GM12878 (cell line): ENCODE measurements at regions of chr11 and their contacts with region 1.

Region 1: DNA sequence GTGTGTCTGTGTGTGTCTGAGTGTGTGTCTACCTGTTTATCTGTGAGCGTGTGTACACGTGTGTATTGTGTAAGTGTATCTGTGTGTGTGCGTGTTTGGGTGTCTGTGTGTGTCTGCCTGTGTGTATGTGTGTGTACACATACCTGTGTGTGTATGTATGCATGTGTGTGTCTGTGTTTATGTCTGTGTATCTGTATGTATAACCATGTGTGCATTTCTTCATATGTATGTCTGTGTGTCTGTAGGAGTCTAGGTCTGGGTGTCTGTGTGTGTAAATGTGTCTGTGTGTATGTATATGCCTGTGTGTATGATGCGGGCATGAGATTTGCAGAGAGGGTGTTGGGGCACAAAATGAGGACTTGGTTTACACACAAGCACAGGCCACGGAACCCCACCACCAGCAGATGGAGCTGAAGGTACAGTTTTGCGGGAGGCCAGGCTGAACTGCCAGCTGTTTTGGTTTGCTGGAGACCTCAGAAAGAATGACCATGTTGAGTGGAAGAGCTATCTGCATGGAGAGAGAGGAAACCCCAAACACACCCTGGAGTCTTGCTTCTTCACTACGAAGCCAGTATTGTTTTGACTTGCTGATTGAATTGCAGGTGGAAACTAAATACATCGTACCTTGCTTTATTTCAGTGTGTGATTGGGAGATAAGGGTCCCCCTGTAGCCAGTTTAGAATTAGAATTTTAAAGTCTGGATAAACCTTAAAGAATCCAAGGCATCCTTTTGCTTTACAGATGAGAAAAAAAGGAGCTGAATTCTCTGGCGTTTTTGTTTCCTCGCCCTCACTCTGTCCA is 497.2 kb downstream of the NTM start:
- DNase-seq: no peak
- ATAC-seq: peak; percentile 96
- H3K4me3 ChIP-seq: no peak overlapping the region
- H3K27ac ChIP-seq: no peak overlapping the region
- H3K4me1 ChIP-seq: no peaks in the 10 kb centered on the region; the same call in 1 of the 2 replicates
- H3K27me3 ChIP-seq: 0 out of 4 replicates have a peak, but pooled peaks cover 0 to 1% of the 10 kb centered on the region in 2 experiments
- CTCF ChIP-seq: peak; percentile 86 to 93 (median 90)
- EP300 ChIP-seq: no peak
- POLR2A ChIP-seq: no peak
- RAD21 ChIP-seq: peak; percentile 97

Region 2: GRCh38 chr11:131823772-131824171 is 43.9 kb before region 1 on chr11:
- CTCF ChIA-PET with region 1: no interaction called
- POLR2A ChIA-PET with region 1: no interaction called
- RAD21 ChIA-PET with region 1: no interaction called
- SMC1A ChIA-PET with region 1: no interaction called
- in situ Hi-C with region 1: no loop called
- intact Hi-C with region 1: no loop called
- DNase-seq: no peak
- ATAC-seq: no peak
- H3K4me3 ChIP-seq: no peak overlapping the region
- H3K27ac ChIP-seq: no peak overlapping the region
- H3K4me1 ChIP-seq: no peaks in the 10 kb centered on the region
- H3K27me3 ChIP-seq: peaks cover 2% of the 10 kb centered on the region in 2 experiments; a peak in 3 of 4 replicates
- CTCF ChIP-seq: no peak
- EP300 ChIP-seq: no peak
- POLR2A ChIP-seq: no peak
- RAD21 ChIP-seq: no peak

Region 3: DNA sequence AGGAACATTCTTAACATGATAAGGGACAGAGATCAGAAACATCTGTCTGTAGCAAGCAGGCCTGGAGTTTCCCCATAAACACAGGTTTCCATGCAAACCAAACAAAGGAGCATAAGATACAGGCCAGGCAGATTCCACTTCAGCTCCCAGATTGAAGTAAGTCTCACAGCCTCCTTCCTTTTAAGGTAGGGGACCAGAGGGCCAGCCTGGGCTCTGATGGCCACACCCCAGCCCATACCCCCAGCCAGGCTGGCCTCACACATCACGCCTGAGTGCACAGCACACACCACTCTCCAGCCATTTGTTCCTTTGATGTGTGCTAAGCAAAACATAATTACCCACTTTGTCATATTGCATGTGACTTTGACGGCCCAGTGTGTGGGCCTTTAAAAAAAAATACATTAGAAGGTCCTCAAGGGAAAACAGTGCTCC is 21.5 kb after region 1 on chr11:
- CTCF ChIA-PET with region 1: interaction called, 215 read pairs
- POLR2A ChIA-PET with region 1: interaction called, 3 read pairs
- RAD21 ChIA-PET with region 1: interaction called, 136 read pairs
- SMC1A ChIA-PET with region 1: interaction called, 81 read pairs
- in situ Hi-C with region 1: no loop called
- intact Hi-C with region 1: no loop called
- DNase-seq: peak; percentile 66
- ATAC-seq: peak; percentile 82
- H3K4me3 ChIP-seq: no peak overlapping the region
- H3K27ac ChIP-seq: no peak overlapping the region
- H3K4me1 ChIP-seq: peaks cover 52% of the 10 kb centered on the region
- H3K27me3 ChIP-seq: no peaks in the 10 kb centered on the region
- CTCF ChIP-seq: no peak
- EP300 ChIP-seq: peak; percentile 21 to 77; a peak in 2 of 4 replicates
- POLR2A ChIP-seq: no peak
- RAD21 ChIP-seq: no peak

Region 4: GRCh38 chr11:131910523-131911387 is 43.1 kb after region 1 on chr11:
- CTCF ChIA-PET with region 1: interaction called, 133 read pairs
- POLR2A ChIA-PET with region 1: no interaction called
- RAD21 ChIA-PET with region 1: interaction called, 91 read pairs
- SMC1A ChIA-PET with region 1: interaction called, 53 read pairs
- in situ Hi-C with region 1: no loop called
- intact Hi-C with region 1: loop called (anchors 1 kb)
- DNase-seq: no peak
- ATAC-seq: no peak
- H3K4me3 ChIP-seq: no peak overlapping the region
- H3K27ac ChIP-seq: no peak overlapping the region
- H3K4me1 ChIP-seq: no peaks in the 10 kb centered on the region
- H3K27me3 ChIP-seq: peaks cover 2 to 11% of the 10 kb centered on the region in 2 experiments
- CTCF ChIP-seq: no peak
- EP300 ChIP-seq: no peak
- POLR2A ChIP-seq: no peak
- RAD21 ChIP-seq: no peak

Region 5: DNA sequence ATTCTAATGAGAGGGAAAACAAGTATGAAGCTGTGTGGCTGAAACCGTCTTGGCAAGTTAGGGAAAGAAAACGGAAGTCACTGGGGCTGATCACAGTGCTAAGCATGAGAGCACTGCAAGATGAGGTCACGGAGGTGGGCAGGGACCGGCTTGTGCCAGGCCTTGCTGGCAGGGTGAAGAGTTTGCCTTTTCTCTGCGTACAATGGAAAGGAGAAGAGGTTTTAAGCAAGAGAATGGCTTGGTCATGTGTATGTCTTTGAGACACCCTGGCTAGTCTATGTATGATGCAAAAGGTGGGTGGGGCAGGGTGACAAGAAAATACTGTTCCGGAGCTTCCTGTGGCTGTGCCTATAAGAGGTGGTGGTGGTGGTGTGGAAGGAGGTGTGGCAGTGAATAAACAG is 70.7 kb after region 1 on chr11:
- CTCF ChIA-PET with region 1: interaction called, 12 read pairs
- POLR2A ChIA-PET with region 1: no interaction called
- RAD21 ChIA-PET with region 1: interaction called, 4 read pairs
- SMC1A ChIA-PET with region 1: interaction called, 7 read pairs
- in situ Hi-C with region 1: no loop called
- intact Hi-C with region 1: no loop called
- DNase-seq: peak; percentile 12
- ATAC-seq: peak; percentile 97
- H3K4me3 ChIP-seq: no peak overlapping the region
- H3K27ac ChIP-seq: no peak overlapping the region
- H3K4me1 ChIP-seq: peaks cover 6% of the 10 kb centered on the region
- H3K27me3 ChIP-seq: peaks cover 2 to 4% of the 10 kb centered on the region in 2 experiments; a peak in 2 of 4 replicates
- CTCF ChIP-seq: no peak
- EP300 ChIP-seq: no peak
- POLR2A ChIP-seq: no peak
- RAD21 ChIP-seq: no peak

Region 6: DNA sequence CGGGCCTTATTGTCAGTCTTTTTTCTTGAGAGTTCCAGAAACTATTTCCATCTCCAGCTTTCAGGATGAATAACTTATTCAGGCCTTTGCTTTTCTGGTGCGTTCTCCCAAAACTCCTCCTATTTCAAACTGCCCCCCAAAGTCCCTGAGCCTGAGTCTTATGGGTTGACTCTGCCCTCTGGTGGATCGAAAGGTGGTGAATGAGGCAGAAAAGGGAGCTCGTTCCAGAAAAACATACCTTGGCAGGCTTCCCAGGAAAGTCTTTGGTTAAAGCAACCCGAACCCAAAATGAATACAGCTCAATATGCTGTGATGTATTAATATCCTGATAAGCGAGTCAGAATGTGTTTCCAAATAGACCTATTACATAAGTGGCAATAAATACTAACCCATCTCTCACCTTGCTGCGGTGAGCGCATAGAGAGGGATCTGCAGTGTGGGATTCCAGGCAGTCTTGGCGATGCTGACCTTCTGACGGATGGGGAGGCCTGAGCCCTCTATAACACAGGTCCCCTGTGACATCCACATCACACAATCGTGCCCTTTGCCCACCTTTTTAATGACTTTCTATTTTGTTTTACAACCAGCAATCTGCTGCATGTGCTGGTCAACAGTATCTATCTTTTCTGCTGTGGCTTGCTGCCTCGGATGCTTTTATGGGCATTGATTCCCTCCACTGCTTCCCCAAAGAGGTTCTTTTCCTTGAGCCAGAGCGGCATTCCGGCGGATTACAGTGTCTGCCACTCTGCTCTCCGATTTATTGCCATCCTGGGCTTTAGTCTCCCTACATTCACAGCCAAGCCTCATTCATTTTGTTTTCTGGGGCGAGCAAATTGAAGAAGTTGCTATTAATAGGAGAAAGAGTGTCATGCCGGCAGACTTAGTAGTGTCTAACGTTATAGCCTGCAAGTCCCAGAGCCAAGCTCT is 259.6 kb after region 1 on chr11:
- CTCF ChIA-PET with region 1: interaction called, 66 read pairs
- POLR2A ChIA-PET with region 1: no interaction called
- RAD21 ChIA-PET with region 1: interaction called, 48 read pairs
- SMC1A ChIA-PET with region 1: interaction called, 34 read pairs
- in situ Hi-C with region 1: loop called (anchors 5 kb)
- intact Hi-C with region 1: loop called (anchors 1 kb)
- DNase-seq: no peak
- ATAC-seq: peak; percentile 30; the same call in 1 of the 3 replicates
- H3K4me3 ChIP-seq: no peak overlapping the region
- H3K27ac ChIP-seq: no peak overlapping the region
- H3K4me1 ChIP-seq: peaks cover 3% of the 10 kb centered on the region
- H3K27me3 ChIP-seq: no peaks in the 10 kb centered on the region; a peak in 2 of 4 replicates
- CTCF ChIP-seq: peak; percentile 35 to 57 (median 46); a peak in 4 of 6 replicates
- EP300 ChIP-seq: no peak
- POLR2A ChIP-seq: no peak
- RAD21 ChIP-seq: peak; percentile 78

Region 7: GRCh38 chr11:132312701-132313111 is 445.0 kb after region 1 on chr11:
- CTCF ChIA-PET with region 1: interaction called, 10 read pairs
- POLR2A ChIA-PET with region 1: no interaction called
- RAD21 ChIA-PET with region 1: no interaction called
- SMC1A ChIA-PET with region 1: no interaction called
- in situ Hi-C with region 1: no loop called
- intact Hi-C with region 1: no loop called
- DNase-seq: no peak
- ATAC-seq: peak; percentile 82
- H3K4me3 ChIP-seq: no peak overlapping the region
- H3K27ac ChIP-seq: no peak overlapping the region
- H3K4me1 ChIP-seq: no peaks in the 10 kb centered on the region
- H3K27me3 ChIP-seq: no peaks in the 10 kb centered on the region
- CTCF ChIP-seq: peak; percentile 52 to 68 (median 67)
- EP300 ChIP-seq: no peak
- POLR2A ChIP-seq: no peak
- RAD21 ChIP-seq: peak; percentile 50; the same call in 1 of the 2 replicates